Dendritic cell treated with granulocyte-macrophage colony-stimulating factor and Interleukin-4, amounts not matched to agents 40 ng/mL and 50 ng/mL, for 4 days (primary cell): ENCODE measurements at regions of chr11 and their contacts with region 1.

Region 1: GRCh38 chr11:121318848-121319834 is 26.6 kb downstream of the SC5D start:
- H3K4me3 Mint-ChIP-seq: no peak overlapping the region
- H3K27ac Mint-ChIP-seq: no peak overlapping the region
- H3K4me1 Mint-ChIP-seq: peaks cover 10% of the 10 kb centered on the region
- H3K27me3 Mint-ChIP-seq: peaks cover 4% of the 10 kb centered on the region

Region 2: DNA sequence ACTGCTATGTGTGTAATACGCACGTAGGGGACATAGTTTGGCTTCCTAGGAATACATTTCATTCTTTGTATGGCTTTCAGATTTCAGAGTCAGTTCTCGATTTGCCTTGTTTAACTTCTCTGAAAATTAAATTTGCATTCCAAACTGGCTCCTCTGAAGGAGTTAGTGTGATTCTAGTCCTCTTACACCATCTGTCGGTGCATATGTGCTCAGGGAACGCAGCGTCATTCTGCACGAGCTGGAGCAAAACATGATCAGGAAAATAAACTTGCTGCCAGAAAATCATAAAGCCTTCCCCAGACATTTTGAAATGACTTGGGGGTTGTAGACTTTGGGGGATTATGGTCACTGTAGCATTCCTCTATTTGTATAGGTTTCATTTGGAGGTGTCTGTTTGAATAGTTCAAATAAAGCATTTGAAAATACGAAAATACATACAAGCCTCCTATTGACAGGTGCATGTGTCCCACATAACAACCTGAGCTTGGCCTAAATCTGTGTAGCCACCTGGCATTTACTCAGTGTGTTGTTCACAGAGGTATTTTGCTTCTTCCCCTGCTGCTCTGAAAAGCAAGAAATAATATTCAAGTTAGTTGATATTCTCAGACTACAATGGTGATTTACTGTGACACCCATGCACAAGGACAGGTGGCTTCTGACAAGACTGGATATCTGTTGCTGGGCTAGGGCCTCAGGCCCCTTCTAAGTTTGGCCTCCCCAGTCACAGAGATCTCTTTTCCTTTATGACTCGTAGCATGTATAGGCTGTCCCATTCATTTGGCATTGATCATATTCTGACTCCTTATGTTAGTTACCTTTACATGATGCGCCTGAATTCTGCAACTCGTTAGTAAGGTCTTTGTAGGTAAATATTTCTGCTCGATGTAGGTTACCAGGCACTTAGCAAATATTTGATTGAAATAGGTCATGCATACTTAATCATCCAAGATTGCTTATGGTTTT is 215.3 kb after region 1 on chr11:
- intact Hi-C with region 1: loop called (anchors 5 kb)
- H3K4me3 Mint-ChIP-seq: no peak overlapping the region
- H3K27ac Mint-ChIP-seq: no peak overlapping the region
- H3K4me1 Mint-ChIP-seq: no peaks in the 10 kb centered on the region
- H3K27me3 Mint-ChIP-seq: no peaks in the 10 kb centered on the region

Region 3: GRCh38 chr11:121591405-121592033 is 272.4 kb after region 1 on chr11:
- intact Hi-C with region 1: loop called (anchors 1 kb)
- H3K4me3 Mint-ChIP-seq: no peak overlapping the region
- H3K27ac Mint-ChIP-seq: no peak overlapping the region
- H3K4me1 Mint-ChIP-seq: peaks cover 40% of the 10 kb centered on the region
- H3K27me3 Mint-ChIP-seq: no peaks in the 10 kb centered on the region